A673 (cell line): ENCODE measurements at regions of chr11 and their contacts with region 1.

Region 1: DNA sequence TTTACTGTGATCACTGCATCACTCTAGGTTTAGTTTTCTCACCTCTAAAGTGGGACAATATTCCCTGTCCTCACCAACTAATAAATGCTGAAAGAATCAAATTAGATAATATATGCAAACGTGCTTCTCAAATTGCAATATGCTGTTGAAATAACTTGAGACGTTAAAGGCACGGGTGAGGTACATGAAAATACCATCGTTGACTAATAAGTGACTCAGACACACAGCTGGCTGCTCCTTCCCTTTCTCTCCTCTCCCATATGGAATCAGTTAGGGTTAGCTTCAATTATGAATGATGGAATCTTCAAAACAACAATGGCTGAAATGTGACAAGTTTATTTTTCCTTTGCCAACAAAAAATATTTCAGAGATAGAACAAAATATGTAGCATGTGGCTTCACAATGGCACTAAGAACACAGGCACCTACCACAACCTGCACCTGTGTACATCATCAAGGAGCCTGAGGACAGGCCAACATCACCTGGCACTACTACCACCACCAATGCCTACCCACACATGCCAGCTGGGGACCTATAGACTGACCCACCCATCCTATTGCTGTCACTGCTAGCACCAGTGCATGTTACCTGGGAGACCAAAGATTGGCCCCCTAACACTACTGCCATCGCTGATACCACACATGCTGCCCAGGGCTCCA is 13.7 kb downstream of the GDPD4 start:
- DNase-seq: peak; percentile 60
- H3K4me3 ChIP-seq: no peak overlapping the region
- H3K27ac ChIP-seq: no peak overlapping the region
- H3K4me1 ChIP-seq: no peaks in the 10 kb centered on the region
- H3K27me3 ChIP-seq: peaks cover 5% of the 10 kb centered on the region
- CTCF ChIP-seq: no peak

Region 2: GRCh38 chr11:77250881-77251640 is 36.7 kb before region 1 on chr11:
- CTCF ChIA-PET with region 1: no interaction called
- POLR2A ChIA-PET with region 1: no interaction called
- intact Hi-C with region 1: no loop called
- DNase-seq: peak; percentile 68
- H3K4me3 ChIP-seq: no peak overlapping the region
- H3K27ac ChIP-seq: no peak overlapping the region
- H3K4me1 ChIP-seq: no peaks in the 10 kb centered on the region
- H3K27me3 ChIP-seq: no peaks in the 10 kb centered on the region
- CTCF ChIP-seq: no peak

Region 3: GRCh38 chr11:77309401-77310085 is 21.8 kb after region 1 on chr11:
- CTCF ChIA-PET with region 1: interaction called, 14 read pairs
- POLR2A ChIA-PET with region 1: no interaction called
- intact Hi-C with region 1: no loop called
- DNase-seq: no peak
- H3K4me3 ChIP-seq: no peak overlapping the region
- H3K27ac ChIP-seq: no peak overlapping the region
- H3K4me1 ChIP-seq: no peaks in the 10 kb centered on the region
- H3K27me3 ChIP-seq: no peaks in the 10 kb centered on the region
- CTCF ChIP-seq: no peak